ENCODE measurements at regions of chr5 and their contacts with region 1.

Region 1: DNA sequence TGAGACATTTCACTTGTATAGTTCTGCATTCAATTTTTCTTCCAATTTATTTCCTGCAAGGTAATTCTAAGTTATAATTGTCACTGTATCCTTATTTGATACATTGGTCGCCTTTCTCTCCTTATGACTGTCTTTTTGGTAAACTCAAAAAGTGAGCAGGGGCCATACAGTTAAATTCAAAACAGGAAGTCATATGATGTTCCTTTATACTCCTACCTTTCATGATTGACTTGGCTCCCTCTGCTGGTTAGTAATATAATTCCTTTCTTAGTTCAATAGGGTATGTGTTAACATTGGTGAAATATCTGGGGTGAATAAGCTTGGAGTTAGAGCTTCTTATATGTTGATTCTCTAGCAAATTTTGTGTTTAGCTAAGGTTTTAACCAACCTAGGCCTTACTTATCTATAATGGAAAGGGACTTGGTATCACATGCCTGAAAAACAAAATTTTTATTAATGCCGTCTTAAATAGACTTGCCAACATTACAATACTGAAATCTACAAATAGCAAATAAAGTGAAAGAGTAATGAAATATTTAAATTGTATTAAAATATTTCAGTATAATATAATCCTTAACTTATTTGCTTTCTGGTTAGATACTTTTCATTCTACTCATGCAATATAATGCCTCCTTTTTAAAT is 6.0 kb upstream of the NIPBL start:
- DNase-seq: no peak
- ATAC-seq: peak; percentile 39 to 74 (median 69)
- H3K4me3 ChIP-seq: no peak overlapping the region
- H3K27ac ChIP-seq: no peak overlapping the region
- H3K4me1 ChIP-seq: peaks cover 3 to 39% (median 21%) of the 10 kb centered on the region in 12 donors
- H3K27me3 ChIP-seq: no peaks in the 10 kb centered on the region
- CTCF ChIP-seq: peak; percentile 49 to 80 (median 62)
- POLR2A ChIP-seq: no peak

Region 2: GRCh38 chr5:36728697-36729543 is 141.6 kb before region 1 on chr5:
- intact Hi-C with region 1: loop called in 5 of 10 experiments (anchors 5 to 10 kb)
- DNase-seq: peak in 1 of 5 donors; percentile 17
- ATAC-seq: peak in 3 of 4 donors; percentile 45 to 71 (median 57)
- H3K4me3 ChIP-seq: no peak overlapping the region
- H3K27ac ChIP-seq: no peak overlapping the region
- H3K4me1 ChIP-seq: peaks cover 0 to 20% (median 0%) of the 10 kb centered on the region in 12 donors
- H3K27me3 ChIP-seq: no peaks in the 10 kb centered on the region
- CTCF ChIP-seq: peak; percentile 61 to 81 (median 66)
- POLR2A ChIP-seq: no peak

Region 3: GRCh38 chr5:36734422-36734821 is 136.1 kb before region 1 on chr5:
- intact Hi-C with region 1: loop called in 5 of 10 experiments (anchors 5 to 10 kb)
- DNase-seq: no peak
- ATAC-seq: peak in 3 of 4 donors; percentile 61 to 65 (median 61)
- H3K4me3 ChIP-seq: no peak overlapping the region
- H3K27ac ChIP-seq: no peak overlapping the region
- H3K4me1 ChIP-seq: peaks cover 0 to 2% (median 0%) of the 10 kb centered on the region in 12 donors
- H3K27me3 ChIP-seq: peaks cover 0 to 27% (median 0%) of the 10 kb centered on the region in 9 donors
- CTCF ChIP-seq: peak in 6 of 12 donors; percentile 5 to 27 (median 18)
- POLR2A ChIP-seq: no peak

Region 4: DNA sequence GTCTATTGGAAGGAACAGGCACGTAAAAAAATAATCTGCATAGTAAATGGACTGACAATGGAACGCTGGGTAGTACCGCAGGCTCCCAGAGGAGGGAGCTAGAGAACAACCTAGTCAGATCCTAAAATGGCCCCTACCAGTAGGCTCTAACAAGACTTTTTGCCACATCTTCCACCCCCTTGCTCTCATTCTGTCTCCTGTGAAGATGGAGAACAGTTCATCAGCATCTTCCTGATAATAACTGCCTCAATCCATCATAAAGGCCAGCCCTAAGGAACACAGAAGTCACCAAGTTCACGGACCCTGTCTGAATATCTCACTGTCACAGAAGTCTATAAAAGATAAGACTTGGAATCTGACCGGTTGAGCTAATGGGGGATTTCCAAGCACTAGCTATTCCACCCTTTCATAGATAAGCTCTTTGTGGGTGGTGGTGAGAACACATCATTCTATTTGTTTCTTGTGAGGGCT is 130.7 kb before region 1 on chr5:
- intact Hi-C with region 1: loop called in 9 of 10 experiments (anchors 2 to 10 kb)
- DNase-seq: peak; percentile 18 to 66 (median 43)
- ATAC-seq: peak; percentile 15 to 53 (median 45)
- H3K4me3 ChIP-seq: no peak overlapping the region
- H3K27ac ChIP-seq: no peak overlapping the region
- H3K4me1 ChIP-seq: peaks cover 0 to 17% (median 5%) of the 10 kb centered on the region in 12 donors
- H3K27me3 ChIP-seq: peaks cover 0 to 24% (median 0%) of the 10 kb centered on the region in 9 donors
- CTCF ChIP-seq: peak; percentile 46 to 74 (median 66)
- POLR2A ChIP-seq: no peak

Region 5: GRCh38 chr5:36744773-36745589 is 125.5 kb before region 1 on chr5:
- intact Hi-C with region 1: loop called in 7 of 10 experiments (anchors 2 to 10 kb)
- DNase-seq: peak in 3 of 5 donors; percentile 51 to 82 (median 64)
- ATAC-seq: peak; percentile 34 to 82 (median 78)
- H3K4me3 ChIP-seq: peak overlapping the region; percentile 40 to 72 (median 59)
- H3K27ac ChIP-seq: peak overlapping the region in 3 of 12 donors; percentile 6 to 36 (median 26)
- H3K4me1 ChIP-seq: peaks cover 0 to 26% (median 9%) of the 10 kb centered on the region in 12 donors
- H3K27me3 ChIP-seq: peaks cover 0 to 8% (median 0%) of the 10 kb centered on the region in 9 donors
- CTCF ChIP-seq: peak in 4 of 12 donors; percentile 20 to 44 (median 30)
- POLR2A ChIP-seq: no peak

Region 6: GRCh38 chr5:36908544-36909260 is 38.2 kb after region 1 on chr5:
- intact Hi-C with region 1: no loop called
- DNase-seq: no peak
- ATAC-seq: no peak
- H3K4me3 ChIP-seq: no peak overlapping the region
- H3K27ac ChIP-seq: no peak overlapping the region
- H3K4me1 ChIP-seq: peaks cover 4 to 53% (median 36%) of the 10 kb centered on the region in 12 donors
- H3K27me3 ChIP-seq: no peaks in the 10 kb centered on the region
- CTCF ChIP-seq: no peak
- POLR2A ChIP-seq: no peak